HEK293 (cell line): ENCODE measurements at regions of chr6 and their contacts with region 1.

Region 1: GRCh38 chr6:133973109-133973971 is 20.3 kb downstream of the TBPL1 start:
- H3K4me3 ChIP-seq: no peak overlapping the region
- H3K27ac ChIP-seq: 0 out of 2 replicates have a peak overlapping the region, but pooled peaks have one; percentile 13
- H3K4me1 ChIP-seq: peaks cover 21% of the 10 kb centered on the region
- CTCF ChIP-seq: peak; percentile 47; the same call in 1 of the 2 replicates

Region 2: GRCh38 chr6:132887204-132887603 is 1086.1 kb before region 1 on chr6:
- CTCF ChIA-PET with region 1: no interaction called
- POLR2A ChIA-PET with region 1: no interaction called
- H3K4me3 ChIP-seq: no peak overlapping the region
- H3K27ac ChIP-seq: no peak overlapping the region
- H3K4me1 ChIP-seq: no peaks in the 10 kb centered on the region
- CTCF ChIP-seq: no peak

Region 3: DNA sequence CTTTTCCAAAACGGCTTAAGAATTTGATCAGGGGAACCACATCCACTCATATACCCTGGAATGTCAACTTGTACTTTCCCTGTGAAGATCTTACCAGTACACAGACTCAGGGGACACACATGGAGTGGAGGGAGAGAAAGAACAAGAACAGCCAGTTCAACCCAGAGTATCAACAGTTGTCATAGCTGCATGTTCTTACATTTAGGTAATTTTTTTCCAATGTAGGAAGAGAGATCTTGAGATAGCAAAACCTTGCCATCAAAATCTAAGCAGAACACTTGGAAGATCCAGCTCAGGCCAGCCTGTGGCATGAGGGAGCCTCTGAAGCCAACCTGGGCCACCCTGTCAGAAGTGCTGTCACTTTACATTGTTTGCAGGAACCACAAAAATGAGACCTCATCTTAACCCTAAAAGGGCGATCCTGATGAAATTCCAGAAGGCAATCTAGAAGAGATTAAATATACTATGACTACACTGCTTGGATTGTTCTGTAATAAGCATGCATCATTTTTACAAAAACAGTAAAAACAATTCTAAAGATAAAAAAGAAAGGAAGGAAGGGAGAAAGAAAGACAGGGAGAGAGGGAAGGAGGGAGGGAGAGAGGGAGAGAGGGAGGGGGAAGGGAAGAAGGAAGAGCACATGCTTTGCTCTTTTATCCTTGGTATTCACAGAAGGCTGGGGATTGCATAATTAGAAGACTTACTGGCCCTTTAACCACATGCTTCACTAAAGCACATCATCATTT is 209.2 kb before region 1 on chr6:
- CTCF ChIA-PET with region 1: no interaction called
- POLR2A ChIA-PET with region 1: no interaction called
- H3K4me3 ChIP-seq: no peak overlapping the region
- H3K27ac ChIP-seq: no peak overlapping the region
- H3K4me1 ChIP-seq: peaks cover 10% of the 10 kb centered on the region; the same call in 1 of the 2 replicates
- CTCF ChIP-seq: no peak

Region 4: GRCh38 chr6:133952815-133953633 is 20.3 kb before region 1 on chr6 and contains the start of gene TBPL1:
- CTCF ChIA-PET with region 1: interaction called, 25 read pairs
- POLR2A ChIA-PET with region 1: interaction called, 5 read pairs
- H3K4me3 ChIP-seq: peak within 1 kb of the TSS; percentile 98
- H3K27ac ChIP-seq: peak within 1 kb of the TSS; percentile 70
- H3K4me1 ChIP-seq: peaks cover 18% of the 10 kb centered on the region
- CTCF ChIP-seq: no peak

Region 5: DNA sequence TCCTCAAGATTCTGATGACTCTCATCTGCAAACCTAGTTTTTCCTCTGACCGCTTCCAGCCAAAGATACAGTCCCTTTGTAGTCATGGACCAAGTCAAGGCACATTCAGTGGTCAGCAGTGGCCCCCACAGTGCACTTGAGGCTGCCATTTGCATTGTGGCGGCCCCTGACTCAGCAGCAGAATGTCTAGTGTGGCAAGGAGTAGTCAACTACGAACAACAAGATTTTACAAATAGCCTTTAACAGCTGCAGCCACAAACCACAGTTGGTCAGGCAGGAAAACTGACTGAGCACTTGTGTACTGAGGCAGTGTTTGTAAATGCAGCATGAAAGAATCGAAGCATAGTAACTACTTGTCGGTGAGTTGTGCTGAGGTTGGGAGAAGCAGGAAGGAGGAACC is 29.5 kb after region 1 on chr6:
- CTCF ChIA-PET with region 1: interaction called, 10 read pairs
- POLR2A ChIA-PET with region 1: no interaction called
- H3K4me3 ChIP-seq: no peak overlapping the region
- H3K27ac ChIP-seq: no peak overlapping the region
- H3K4me1 ChIP-seq: no peaks in the 10 kb centered on the region
- CTCF ChIP-seq: no peak

Region 6: DNA sequence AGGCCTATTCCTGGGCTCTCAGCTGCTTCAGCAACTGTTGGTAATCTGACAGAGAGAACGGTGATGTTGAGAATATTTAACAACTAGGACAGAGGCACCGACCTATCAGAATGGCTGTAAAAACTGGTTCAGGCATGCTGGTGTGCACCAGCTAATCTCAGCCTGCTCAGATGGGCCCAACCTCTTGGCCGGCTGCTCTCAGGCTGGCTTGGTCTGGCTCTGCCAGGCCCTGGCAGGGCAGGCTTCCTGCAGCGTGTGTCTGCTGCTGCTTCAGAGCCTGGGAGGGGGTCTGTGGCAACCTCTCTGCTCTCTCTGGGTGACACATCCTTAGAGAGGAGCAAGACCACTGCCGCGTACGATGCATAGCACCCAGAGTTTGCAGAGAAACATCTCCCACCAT is 74.3 kb after region 1 on chr6:
- CTCF ChIA-PET with region 1: interaction called, 22 read pairs
- POLR2A ChIA-PET with region 1: no interaction called
- H3K4me3 ChIP-seq: no peak overlapping the region
- H3K27ac ChIP-seq: no peak overlapping the region
- H3K4me1 ChIP-seq: 0 out of 2 replicates have a peak, but pooled peaks cover 3% of the 10 kb centered on the region
- CTCF ChIP-seq: no peak

Region 7: DNA sequence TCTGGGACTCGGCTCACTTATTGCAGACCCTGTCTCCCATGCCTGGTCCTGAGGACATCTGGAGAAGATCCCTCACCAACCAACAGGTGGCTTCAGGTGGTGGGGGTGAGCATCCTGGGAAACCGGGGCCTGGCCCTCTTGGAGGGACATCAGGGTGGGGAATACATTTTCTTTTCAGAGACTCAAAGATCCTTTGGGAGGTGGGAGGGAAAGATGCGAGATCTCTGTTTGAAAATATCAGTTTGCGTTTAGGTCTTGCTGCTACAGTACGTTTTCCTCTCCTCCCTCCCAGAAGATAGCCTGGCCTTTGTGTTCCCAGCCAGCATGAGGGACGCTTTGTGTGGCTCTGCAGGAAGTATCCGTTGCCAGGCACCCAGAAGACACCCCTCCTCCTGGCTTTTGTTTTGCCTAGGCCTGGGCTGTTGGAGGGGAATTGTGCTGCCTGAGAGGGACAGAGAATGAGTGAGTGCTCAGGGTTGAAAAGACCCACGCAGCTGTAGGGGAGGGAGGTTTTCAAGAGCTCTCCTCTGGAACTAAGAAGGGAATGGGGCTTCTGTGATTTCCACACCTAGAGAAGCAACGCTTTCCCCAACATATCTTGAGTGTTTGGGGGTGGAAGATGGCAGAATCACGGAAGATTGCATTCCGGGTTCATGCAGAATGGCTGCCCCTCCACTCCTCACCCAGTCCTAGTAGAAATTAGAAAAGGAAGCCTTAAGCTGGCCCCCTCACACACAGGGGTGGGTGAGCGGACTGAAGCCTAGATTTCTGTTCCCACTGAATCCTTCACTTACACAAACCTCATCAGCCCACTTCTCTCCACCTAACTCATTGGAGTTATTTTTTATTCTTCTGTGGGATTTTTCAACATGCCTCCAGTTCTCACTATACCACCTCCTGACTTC is 101.1 kb after region 1 on chr6:
- CTCF ChIA-PET with region 1: interaction called, 14 read pairs
- POLR2A ChIA-PET with region 1: no interaction called
- H3K4me3 ChIP-seq: no peak overlapping the region
- H3K27ac ChIP-seq: no peak overlapping the region
- H3K4me1 ChIP-seq: peaks cover under 1% of the 10 kb centered on the region; the same call in 1 of the 2 replicates
- CTCF ChIP-seq: no peak

Region 8: GRCh38 chr6:134253681-134254080 is 280.3 kb after region 1 on chr6:
- CTCF ChIA-PET with region 1: no interaction called
- POLR2A ChIA-PET with region 1: no interaction called
- H3K4me3 ChIP-seq: no peak overlapping the region
- H3K27ac ChIP-seq: no peak overlapping the region
- H3K4me1 ChIP-seq: peaks cover 10% of the 10 kb centered on the region
- CTCF ChIP-seq: no peak